ENCODE measurements at regions of chr4 and their contacts with region 1.

Region 1: GRCh38 chr4:87093443-87094123 is 126.8 kb downstream of the KLHL8 start:
- DNase-seq: peak; percentile 45
- H3K4me3 ChIP-seq: no peak overlapping the region
- H3K27ac ChIP-seq: no peak overlapping the region
- H3K4me1 ChIP-seq: no peaks in the 10 kb centered on the region
- H3K27me3 ChIP-seq: no peaks in the 10 kb centered on the region
- CTCF ChIP-seq: peak; percentile 16 to 60 (median 45)
- POLR2A ChIP-seq: no peak

Region 2: GRCh38 chr4:86927843-86928395 is 165.7 kb before region 1 on chr4:
- intact Hi-C with region 1: loop called (anchors 10 kb)
- DNase-seq: no peak
- H3K4me3 ChIP-seq: no peak overlapping the region
- H3K27ac ChIP-seq: no peak overlapping the region
- H3K4me1 ChIP-seq: no peaks in the 10 kb centered on the region
- H3K27me3 ChIP-seq: no peaks in the 10 kb centered on the region
- CTCF ChIP-seq: no peak
- POLR2A ChIP-seq: no peak

Measured in testis (tissue), 5 donors.